CD4-positive, alpha-beta memory T cell (primary cell): ENCODE measurements at regions of chr1 and their contacts with region 1.

Region 1: GRCh38 chr1:32240140-32240951 is 6.7 kb upstream of the FAM167B start:
- DNase-seq: peak; percentile 53 to 75 (median 55)
- H3K4me3 ChIP-seq: peak overlapping the region; percentile 81
- H3K4me3 Mint-ChIP-seq: peak overlapping the region; percentile 87 to 93 (median 90)
- H3K27ac ChIP-seq: peak overlapping the region; percentile 48
- H3K27ac Mint-ChIP-seq: peak overlapping the region; percentile 68 to 88 (median 79)
- H3K4me1 ChIP-seq: peaks cover 14% of the 10 kb centered on the region
- H3K4me1 Mint-ChIP-seq: peaks cover 0 to 35% (median 15%) of the 10 kb centered on the region in 4 donors
- H3K27me3 ChIP-seq: no peaks in the 10 kb centered on the region
- H3K27me3 Mint-ChIP-seq: no peaks in the 10 kb centered on the region

Region 2: GRCh38 chr1:32205401-32206370 is 34.7 kb before region 1 on chr1 and contains the start of gene IQCC:
- CTCF ChIA-PET with region 1: interaction called, 5 read pairs
- POLR2A ChIA-PET with region 1: interaction called, 14 read pairs
- intact Hi-C with region 1: no loop called
- DNase-seq: peak; percentile 84 to 86 (median 86)
- H3K4me3 ChIP-seq: peak within 1 kb of the TSS; percentile 71 to 73
- H3K4me3 Mint-ChIP-seq: peak within 1 kb of the TSS; percentile 86 to 91 (median 89)
- H3K27ac ChIP-seq: peak within 1 kb of the TSS; percentile 63
- H3K27ac Mint-ChIP-seq: peak within 1 kb of the TSS; percentile 83 to 95 (median 92)
- H3K4me1 ChIP-seq: peaks cover 39% of the 10 kb centered on the region
- H3K4me1 Mint-ChIP-seq: peaks cover 15 to 48% (median 33%) of the 10 kb centered on the region in 4 donors
- H3K27me3 ChIP-seq: no peaks in the 10 kb centered on the region
- H3K27me3 Mint-ChIP-seq: no peaks in the 10 kb centered on the region
- total RNA-seq, gene IQCC: 2.7 TPM

Region 3: DNA sequence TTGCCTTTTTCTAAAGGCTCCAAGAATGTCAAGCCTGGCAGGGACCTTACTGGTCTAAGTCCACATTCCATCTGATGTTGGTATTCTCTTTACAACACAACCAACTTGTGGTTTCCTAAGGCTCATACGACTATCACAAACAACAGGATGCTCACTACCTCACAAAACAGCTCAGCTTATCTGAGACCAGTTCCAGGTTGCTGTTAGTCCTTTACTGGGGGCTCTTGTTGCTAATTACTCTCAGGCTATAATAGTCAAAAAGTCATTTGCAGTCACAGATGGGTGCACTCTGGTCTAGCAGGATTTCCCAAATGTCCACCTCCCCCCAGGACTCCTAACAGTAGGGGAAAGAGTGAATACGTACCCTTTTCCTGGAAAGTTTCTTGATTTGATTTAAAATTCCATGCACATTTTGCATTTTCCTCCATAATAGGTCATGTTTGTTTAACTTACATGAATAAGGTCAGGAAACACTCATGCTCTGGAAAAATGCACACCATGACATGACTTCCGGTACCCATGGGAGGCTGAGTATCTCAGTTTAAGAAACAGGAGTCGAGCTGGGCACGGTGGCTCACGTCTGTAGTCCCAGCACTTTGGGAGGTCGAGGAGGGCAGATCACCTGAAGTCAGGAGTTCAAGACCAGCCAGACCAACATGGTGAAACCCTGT is 26.7 kb after region 1 on chr1:
- CTCF ChIA-PET with region 1: interaction called, 11 read pairs
- POLR2A ChIA-PET with region 1: interaction called, 819 read pairs
- intact Hi-C with region 1: loop called (anchors 2 kb)
- DNase-seq: peak in 3 of 5 donors; percentile 37 to 50 (median 48)
- H3K4me3 ChIP-seq: no peak overlapping the region
- H3K4me3 Mint-ChIP-seq: peak overlapping the region; percentile 74 to 92 (median 85)
- H3K27ac ChIP-seq: peak overlapping the region; percentile 42
- H3K27ac Mint-ChIP-seq: peak overlapping the region; percentile 82 to 99 (median 98)
- H3K4me1 ChIP-seq: peaks cover 82% of the 10 kb centered on the region
- H3K4me1 Mint-ChIP-seq: peaks cover 42 to 71% (median 54%) of the 10 kb centered on the region in 4 donors
- H3K27me3 ChIP-seq: no peaks in the 10 kb centered on the region
- H3K27me3 Mint-ChIP-seq: no peaks in the 10 kb centered on the region

Region 4: DNA sequence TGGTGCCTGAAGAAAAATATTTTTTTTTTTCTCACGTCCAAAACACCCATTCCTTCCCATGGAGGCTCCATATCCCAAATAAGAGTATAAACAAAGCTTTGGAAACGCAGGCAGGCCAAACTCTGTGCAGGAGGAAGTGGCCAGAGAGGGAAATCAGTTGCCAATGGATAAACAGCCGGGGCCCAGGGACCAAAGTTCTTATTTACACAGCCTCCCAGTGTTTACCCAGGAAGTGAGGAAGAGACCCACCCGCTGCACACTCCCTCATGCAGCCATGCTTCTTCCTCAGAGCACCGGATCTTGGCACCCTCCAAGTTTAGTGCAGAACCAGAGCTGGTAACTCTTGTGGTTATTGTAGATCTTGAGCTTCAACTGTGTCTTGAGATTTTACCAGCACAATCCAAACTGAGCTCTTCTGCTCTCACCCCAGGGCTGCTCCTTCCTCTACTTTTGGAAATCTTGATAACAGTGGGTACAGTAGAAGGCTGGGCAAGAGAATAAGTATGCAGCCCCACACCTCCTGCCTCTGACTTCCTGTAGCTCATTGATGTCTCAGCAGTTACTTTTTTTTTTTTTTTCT is 81.5 kb after region 1 on chr1:
- CTCF ChIA-PET with region 1: interaction called, 13 read pairs
- POLR2A ChIA-PET with region 1: interaction called, 20 read pairs
- intact Hi-C with region 1: no loop called
- DNase-seq: peak; percentile 55 to 66 (median 59)
- H3K4me3 ChIP-seq: no peak overlapping the region
- H3K4me3 Mint-ChIP-seq: peak overlapping the region; percentile 72 to 85 (median 78)
- H3K27ac ChIP-seq: peak overlapping the region; percentile 18
- H3K27ac Mint-ChIP-seq: peak overlapping the region; percentile 88 to 96 (median 90)
- H3K4me1 ChIP-seq: peaks cover 63% of the 10 kb centered on the region
- H3K4me1 Mint-ChIP-seq: peaks cover 26 to 55% (median 42%) of the 10 kb centered on the region in 4 donors
- H3K27me3 ChIP-seq: no peaks in the 10 kb centered on the region
- H3K27me3 Mint-ChIP-seq: no peaks in the 10 kb centered on the region

Region 5: GRCh38 chr1:32372149-32372756 is 131.9 kb after region 1 on chr1:
- CTCF ChIA-PET with region 1: interaction called, 16 read pairs
- POLR2A ChIA-PET with region 1: interaction called, 10 read pairs
- intact Hi-C with region 1: loop called (anchors 1 kb)
- DNase-seq: peak; percentile 74 to 86 (median 77)
- H3K4me3 ChIP-seq: no peak overlapping the region
- H3K4me3 Mint-ChIP-seq: peak overlapping the region in 4 of 8 donors; percentile 5 to 36 (median 16)
- H3K27ac ChIP-seq: no peak overlapping the region
- H3K27ac Mint-ChIP-seq: peak overlapping the region in 6 of 7 donors; percentile 10 to 80 (median 47)
- H3K4me1 ChIP-seq: peaks cover 15% of the 10 kb centered on the region
- H3K4me1 Mint-ChIP-seq: peaks cover 13 to 22% (median 20%) of the 10 kb centered on the region in 4 donors
- H3K27me3 ChIP-seq: no peaks in the 10 kb centered on the region
- H3K27me3 Mint-ChIP-seq: no peaks in the 10 kb centered on the region